Endothelial cell of umbilical vein (primary cell): ENCODE measurements at regions of chr11 and their contacts with region 1.

Region 1: GRCh38 chr11:27485930-27486773 is 13.6 kb upstream of the LGR4 start:
- DNase-seq: peak; percentile 75
- H3K4me3 ChIP-seq: no peak overlapping the region
- H3K27ac ChIP-seq: no peak overlapping the region
- H3K4me1 ChIP-seq: no peaks in the 10 kb centered on the region
- H3K27me3 ChIP-seq: no peaks in the 10 kb centered on the region
- CTCF ChIP-seq: peak; percentile 54 to 63
- POLR2A ChIP-seq: no peak

Region 2: DNA sequence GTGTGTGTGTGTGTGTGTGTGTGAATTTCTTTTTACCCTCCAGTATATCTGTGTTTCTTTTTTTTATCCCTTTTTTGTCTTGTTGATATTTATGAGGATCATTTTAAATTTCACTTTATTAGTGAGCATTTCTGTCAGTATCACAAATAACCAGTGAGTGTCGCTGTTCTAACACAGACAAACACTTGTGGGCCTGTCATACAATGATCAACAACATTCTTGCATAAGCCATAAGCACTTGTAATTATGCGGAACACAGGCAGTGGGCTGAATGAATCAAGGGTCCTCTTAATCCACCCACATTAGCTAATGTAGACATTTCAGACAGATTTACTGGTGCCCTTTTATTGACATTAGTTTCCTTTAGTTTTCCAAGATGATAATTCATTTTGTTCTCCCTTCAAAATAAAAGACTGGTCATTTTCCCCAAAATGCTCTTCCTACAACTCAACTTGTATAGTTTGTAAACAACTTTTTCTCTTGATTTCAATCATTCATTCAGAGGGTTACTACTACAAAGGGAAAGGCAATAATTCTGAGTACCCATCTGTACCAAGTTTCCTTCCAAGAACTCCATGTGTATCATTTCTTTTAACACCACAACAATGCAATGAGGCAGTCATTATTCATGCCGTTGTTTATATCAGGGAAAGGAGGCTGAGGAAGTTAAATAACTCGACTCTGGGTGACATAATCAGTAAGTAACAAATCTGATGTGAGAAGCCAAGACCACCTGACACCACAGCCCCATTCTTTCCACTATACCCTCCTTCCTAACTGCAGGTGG is 1188.8 kb before region 1 on chr11:
- CTCF ChIA-PET with region 1: interaction called, 5 read pairs
- POLR2A ChIA-PET with region 1: no interaction called
- dilution Hi-C with region 1: no loop called
- intact Hi-C with region 1: loop called (anchors 5 kb)
- DNase-seq: peak; percentile 52
- H3K4me3 ChIP-seq: no peak overlapping the region
- H3K27ac ChIP-seq: no peak overlapping the region
- H3K4me1 ChIP-seq: no peaks in the 10 kb centered on the region
- H3K27me3 ChIP-seq: peaks cover 2 to 5% of the 10 kb centered on the region in 2 experiments
- CTCF ChIP-seq: peak; percentile 49 to 57
- POLR2A ChIP-seq: no peak

Region 3: GRCh38 chr11:27183672-27184457 is 302.3 kb before region 1 on chr11:
- CTCF ChIA-PET with region 1: interaction called, 367 read pairs
- POLR2A ChIA-PET with region 1: no interaction called
- dilution Hi-C with region 1: loop called (anchors 25 kb)
- intact Hi-C with region 1: loop called (anchors 1 kb)
- DNase-seq: peak; percentile 66
- H3K4me3 ChIP-seq: no peak overlapping the region
- H3K27ac ChIP-seq: no peak overlapping the region
- H3K4me1 ChIP-seq: no peaks in the 10 kb centered on the region
- H3K27me3 ChIP-seq: peaks cover 18 to 20% of the 10 kb centered on the region in 2 experiments
- CTCF ChIP-seq: peak; percentile 37 to 46
- POLR2A ChIP-seq: no peak

Region 4: GRCh38 chr11:27281740-27282590 is 204.2 kb before region 1 on chr11:
- CTCF ChIA-PET with region 1: interaction called, 11 read pairs
- POLR2A ChIA-PET with region 1: no interaction called
- dilution Hi-C with region 1: no loop called
- intact Hi-C with region 1: loop called (anchors 5 kb)
- DNase-seq: peak; percentile 99
- H3K4me3 ChIP-seq: no peak overlapping the region
- H3K27ac ChIP-seq: peak overlapping the region; percentile 56
- H3K4me1 ChIP-seq: peaks cover 23% of the 10 kb centered on the region
- H3K27me3 ChIP-seq: peaks cover 13 to 17% of the 10 kb centered on the region in 2 experiments
- CTCF ChIP-seq: no peak
- POLR2A ChIP-seq: peak; percentile 90

Region 5: GRCh38 chr11:27456140-27456794 is 29.9 kb before region 1 on chr11:
- CTCF ChIA-PET with region 1: interaction called, 17 read pairs
- POLR2A ChIA-PET with region 1: no interaction called
- dilution Hi-C with region 1: no loop called
- intact Hi-C with region 1: no loop called
- DNase-seq: peak; percentile 68
- H3K4me3 ChIP-seq: peak overlapping the region in 1 of 3 experiments; percentile 31
- H3K27ac ChIP-seq: peak overlapping the region; percentile 8
- H3K4me1 ChIP-seq: peaks cover 14% of the 10 kb centered on the region
- H3K27me3 ChIP-seq: no peaks in the 10 kb centered on the region
- CTCF ChIP-seq: no peak
- POLR2A ChIP-seq: no peak

Region 6: GRCh38 chr11:27497284-27497866 is 11.2 kb after region 1 on chr11:
- CTCF ChIA-PET with region 1: interaction called, 72 read pairs
- POLR2A ChIA-PET with region 1: no interaction called
- dilution Hi-C with region 1: no loop called
- intact Hi-C with region 1: no loop called
- DNase-seq: peak; percentile 43
- H3K4me3 ChIP-seq: no peak overlapping the region
- H3K27ac ChIP-seq: no peak overlapping the region
- H3K4me1 ChIP-seq: no peaks in the 10 kb centered on the region
- H3K27me3 ChIP-seq: no peaks in the 10 kb centered on the region
- CTCF ChIP-seq: peak; percentile 20 to 30
- POLR2A ChIP-seq: no peak

Region 7: GRCh38 chr11:27830206-27830605 is 344.1 kb after region 1 on chr11:
- CTCF ChIA-PET with region 1: no interaction called
- POLR2A ChIA-PET with region 1: no interaction called
- dilution Hi-C with region 1: no loop called
- intact Hi-C with region 1: no loop called
- DNase-seq: no peak
- H3K4me3 ChIP-seq: no peak overlapping the region
- H3K27ac ChIP-seq: no peak overlapping the region
- H3K4me1 ChIP-seq: no peaks in the 10 kb centered on the region
- H3K27me3 ChIP-seq: peaks cover 2 to 4% of the 10 kb centered on the region in 2 experiments
- CTCF ChIP-seq: no peak
- POLR2A ChIP-seq: no peak